Heart left ventricle (tissue), 16 donors: ENCODE measurements at regions of chr1 and their contacts with region 1.

Region 1: GRCh38 chr1:112955781-112956543 is at the start of gene SLC16A1:
- DNase-seq: peak; percentile 95 to 97 (median 95)
- ATAC-seq: peak; percentile 84 to 96 (median 93)
- H3K4me3 ChIP-seq: peak within 1 kb of the TSS; percentile 51 to 92 (median 71)
- H3K27ac ChIP-seq: peak within 1 kb of the TSS; percentile 76 to 97 (median 94)
- H3K4me1 ChIP-seq: peaks cover 0 to 62% (median 30%) of the 10 kb centered on the region in 12 donors
- H3K27me3 ChIP-seq: no peaks in the 10 kb centered on the region
- CTCF ChIP-seq: peak in 9 of 12 donors; percentile 4 to 53 (median 39)
- POLR2A ChIP-seq: peak; percentile 72 to 98
- total RNA-seq, gene SLC16A1: 116 to 192 (median 133) TPM

Region 2: GRCh38 chr1:112369392-112370285 is 586.3 kb before region 1 on chr1:
- intact Hi-C with region 1: no loop called
- DNase-seq: peak; percentile 81 to 93 (median 86)
- ATAC-seq: peak; percentile 90 to 99 (median 98)
- H3K4me3 ChIP-seq: no peak overlapping the region
- H3K27ac ChIP-seq: no peak overlapping the region
- H3K4me1 ChIP-seq: peaks cover 0 to 5% (median 0%) of the 10 kb centered on the region in 12 donors
- H3K27me3 ChIP-seq: peaks cover 0 to 8% (median 0%) of the 10 kb centered on the region in 9 donors
- CTCF ChIP-seq: peak; percentile 93 to 99 (median 97)
- POLR2A ChIP-seq: no peak

Region 3: GRCh38 chr1:112754116-112754628 is 201.8 kb before region 1 on chr1:
- intact Hi-C with region 1: no loop called
- DNase-seq: no peak
- ATAC-seq: no peak
- H3K4me3 ChIP-seq: no peak overlapping the region
- H3K27ac ChIP-seq: no peak overlapping the region
- H3K4me1 ChIP-seq: no peaks in the 10 kb centered on the region
- H3K27me3 ChIP-seq: peaks cover 0 to 11% (median 0%) of the 10 kb centered on the region in 9 donors
- CTCF ChIP-seq: no peak
- POLR2A ChIP-seq: no peak

Region 4: DNA sequence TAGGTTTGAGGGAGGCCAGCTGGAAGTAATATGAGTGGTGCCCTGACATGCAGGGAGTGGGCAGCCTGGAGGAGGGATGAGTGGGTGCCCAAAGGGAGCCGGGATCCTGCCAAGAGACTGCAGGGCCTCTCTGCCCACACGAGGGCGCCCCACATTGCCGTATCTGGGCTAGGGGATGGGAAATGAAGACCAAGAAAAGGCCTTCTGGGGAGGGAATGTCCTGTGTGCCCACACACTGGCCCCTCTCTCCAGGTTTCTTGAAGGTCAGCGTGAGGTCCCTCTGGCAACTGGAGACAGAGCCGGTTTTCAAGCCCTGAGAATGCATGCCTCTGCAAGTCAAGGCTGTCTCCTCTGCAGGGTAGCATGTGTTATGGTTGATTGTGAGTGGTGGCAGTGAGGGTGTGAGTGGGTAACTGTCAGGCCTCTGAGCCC is 146.7 kb before region 1 on chr1:
- intact Hi-C with region 1: loop called in 2 of 10 experiments (anchors 5 kb)
- DNase-seq: peak; percentile 64 to 86 (median 74)
- ATAC-seq: peak; percentile 75 to 84 (median 80)
- H3K4me3 ChIP-seq: no peak overlapping the region
- H3K27ac ChIP-seq: no peak overlapping the region
- H3K4me1 ChIP-seq: peaks cover 0 to 12% (median 3%) of the 10 kb centered on the region in 12 donors
- H3K27me3 ChIP-seq: no peaks in the 10 kb centered on the region
- CTCF ChIP-seq: peak; percentile 69 to 91 (median 84)
- POLR2A ChIP-seq: no peak

Region 5: DNA sequence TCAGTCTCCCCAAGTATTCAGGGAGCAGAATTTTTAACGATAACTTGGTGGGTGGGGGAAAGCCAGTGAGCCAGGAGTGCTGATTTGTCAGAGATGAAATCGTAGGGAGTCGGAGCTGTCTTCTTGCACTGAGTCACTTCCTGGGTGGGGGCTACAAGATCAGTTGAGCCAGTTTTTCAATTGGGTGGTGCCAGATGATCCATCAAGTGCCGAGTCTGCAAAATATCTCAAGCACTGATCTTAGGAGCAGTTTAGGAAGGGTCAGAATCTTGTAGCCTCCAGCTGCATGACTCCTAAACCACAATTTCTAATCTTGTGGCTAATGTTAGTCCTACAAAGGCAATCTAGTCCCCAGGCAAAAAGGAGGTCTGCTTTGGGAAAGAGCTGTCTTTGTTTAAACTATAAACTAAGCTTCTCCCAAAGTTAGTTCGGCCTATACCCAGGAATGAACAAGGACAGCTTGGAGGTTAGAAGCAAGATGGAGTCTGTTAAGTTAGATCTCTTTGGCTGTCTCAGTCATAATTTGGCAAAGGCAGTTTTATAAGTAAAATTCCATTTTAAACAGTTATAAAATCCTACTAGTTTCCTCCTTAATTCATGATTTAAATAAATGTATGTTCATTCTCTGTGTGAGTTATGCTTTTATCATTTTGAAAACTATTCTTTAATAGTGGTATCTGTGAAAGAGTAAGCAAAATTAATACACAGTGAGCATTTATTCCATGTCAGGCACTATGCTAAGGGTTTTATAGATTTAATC is 51.7 kb before region 1 on chr1:
- intact Hi-C with region 1: loop called in 1 of 10 experiments (anchors 10 kb)
- DNase-seq: no peak
- ATAC-seq: peak in 1 of 4 donors; percentile 46
- H3K4me3 ChIP-seq: no peak overlapping the region
- H3K27ac ChIP-seq: peak overlapping the region in 9 of 12 donors; percentile 14 to 84 (median 65)
- H3K4me1 ChIP-seq: peaks cover 4 to 37% (median 32%) of the 10 kb centered on the region in 12 donors
- H3K27me3 ChIP-seq: no peaks in the 10 kb centered on the region
- CTCF ChIP-seq: no peak
- POLR2A ChIP-seq: no peak

Region 6: GRCh38 chr1:112982853-112983536 is 27.0 kb after region 1 on chr1:
- intact Hi-C with region 1: loop called in 1 of 10 experiments (anchors 2 kb)
- DNase-seq: peak in 4 of 5 donors; percentile 44 to 64 (median 58)
- ATAC-seq: peak; percentile 91 to 96 (median 94)
- H3K4me3 ChIP-seq: no peak overlapping the region
- H3K27ac ChIP-seq: peak overlapping the region; percentile 64 to 93 (median 83)
- H3K4me1 ChIP-seq: peaks cover 0 to 52% (median 21%) of the 10 kb centered on the region in 12 donors
- H3K27me3 ChIP-seq: no peaks in the 10 kb centered on the region
- CTCF ChIP-seq: no peak
- POLR2A ChIP-seq: no peak

Region 7: GRCh38 chr1:113021430-113022086 is 65.6 kb after region 1 on chr1:
- intact Hi-C with region 1: loop called in 2 of 10 experiments (anchors 5 to 10 kb)
- DNase-seq: no peak
- ATAC-seq: peak in 2 of 4 donors; percentile 32 to 69
- H3K4me3 ChIP-seq: no peak overlapping the region
- H3K27ac ChIP-seq: peak overlapping the region in 4 of 12 donors; percentile 2 to 29 (median 12)
- H3K4me1 ChIP-seq: peaks cover 0 to 7% (median 0%) of the 10 kb centered on the region in 12 donors
- H3K27me3 ChIP-seq: no peaks in the 10 kb centered on the region
- CTCF ChIP-seq: no peak
- POLR2A ChIP-seq: no peak

Region 8: GRCh38 chr1:113042285-113043143 is 86.6 kb after region 1 on chr1:
- intact Hi-C with region 1: loop called in 8 of 10 experiments (anchors 1 to 5 kb)
- DNase-seq: peak; percentile 67 to 82 (median 74)
- ATAC-seq: peak; percentile 86 to 92 (median 92)
- H3K4me3 ChIP-seq: no peak overlapping the region
- H3K27ac ChIP-seq: peak overlapping the region in 1 of 12 donors; percentile 73
- H3K4me1 ChIP-seq: peaks cover 0 to 32% (median 9%) of the 10 kb centered on the region in 12 donors
- H3K27me3 ChIP-seq: no peaks in the 10 kb centered on the region
- CTCF ChIP-seq: peak; percentile 40 to 74 (median 66)
- POLR2A ChIP-seq: no peak

Region 9: DNA sequence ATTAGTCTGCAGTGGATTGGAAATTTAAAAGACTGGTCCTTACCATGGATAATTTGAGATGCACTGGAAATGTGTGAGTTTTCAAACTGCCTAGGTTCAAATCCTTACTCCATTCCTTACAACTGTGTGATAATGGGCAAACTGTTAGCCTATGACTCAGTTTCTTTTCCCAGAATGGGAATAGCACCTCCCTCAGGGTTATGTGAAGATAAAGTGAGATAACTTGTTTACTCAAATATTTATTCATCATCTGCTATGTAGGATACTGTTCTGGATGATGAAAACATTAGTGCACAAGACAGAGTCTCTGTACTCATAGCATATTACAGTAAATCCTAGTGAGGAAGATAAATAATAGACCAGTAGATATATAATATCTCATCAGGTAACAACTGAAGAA is 145.6 kb after region 1 on chr1:
- intact Hi-C with region 1: no loop called
- DNase-seq: no peak
- ATAC-seq: no peak
- H3K4me3 ChIP-seq: no peak overlapping the region
- H3K27ac ChIP-seq: no peak overlapping the region
- H3K4me1 ChIP-seq: peaks cover 0 to 13% (median 2%) of the 10 kb centered on the region in 12 donors
- H3K27me3 ChIP-seq: no peaks in the 10 kb centered on the region
- CTCF ChIP-seq: no peak
- POLR2A ChIP-seq: no peak

Region 10: GRCh38 chr1:113255720-113256347 is 299.9 kb after region 1 on chr1:
- intact Hi-C with region 1: no loop called
- DNase-seq: no peak
- ATAC-seq: no peak
- H3K4me3 ChIP-seq: no peak overlapping the region
- H3K27ac ChIP-seq: no peak overlapping the region
- H3K4me1 ChIP-seq: peaks cover 0 to 7% (median 0%) of the 10 kb centered on the region in 12 donors
- H3K27me3 ChIP-seq: peaks cover 0 to 2% (median 0%) of the 10 kb centered on the region in 9 donors
- CTCF ChIP-seq: no peak
- POLR2A ChIP-seq: no peak